Right cardiac atrium (tissue), 5 donors: ENCODE measurements at regions of chr14 and their contacts with region 1.

Region 1: GRCh38 chr14:61837336-61838229 is 75.4 kb downstream of the SNAPC1 start:
- DNase-seq: peak; percentile 76 to 88 (median 85)
- ATAC-seq: peak; percentile 91 to 92
- H3K4me3 ChIP-seq: no peak overlapping the region
- H3K27ac ChIP-seq: no peak overlapping the region
- H3K4me1 ChIP-seq: no peaks in the 10 kb centered on the region
- H3K27me3 ChIP-seq: no peaks in the 10 kb centered on the region

Region 2: GRCh38 chr14:61296719-61297502 is 540.7 kb before region 1 on chr14:
- intact Hi-C with region 1: loop called in 3 of 4 experiments (anchors 5 to 10 kb)
- DNase-seq: no peak
- ATAC-seq: no peak
- H3K4me3 ChIP-seq: no peak overlapping the region
- H3K27ac ChIP-seq: no peak overlapping the region
- H3K4me1 ChIP-seq: no peaks in the 10 kb centered on the region
- H3K27me3 ChIP-seq: no peaks in the 10 kb centered on the region

Region 3: GRCh38 chr14:61456720-61457119 is 380.9 kb before region 1 on chr14:
- intact Hi-C with region 1: loop called in 3 of 4 experiments (anchors 2 to 5 kb)
- DNase-seq: peak; percentile 85 to 89 (median 86)
- ATAC-seq: peak; percentile 74 to 76
- H3K4me3 ChIP-seq: no peak overlapping the region
- H3K27ac ChIP-seq: no peak overlapping the region
- H3K4me1 ChIP-seq: no peaks in the 10 kb centered on the region
- H3K27me3 ChIP-seq: no peaks in the 10 kb centered on the region

Region 4: DNA sequence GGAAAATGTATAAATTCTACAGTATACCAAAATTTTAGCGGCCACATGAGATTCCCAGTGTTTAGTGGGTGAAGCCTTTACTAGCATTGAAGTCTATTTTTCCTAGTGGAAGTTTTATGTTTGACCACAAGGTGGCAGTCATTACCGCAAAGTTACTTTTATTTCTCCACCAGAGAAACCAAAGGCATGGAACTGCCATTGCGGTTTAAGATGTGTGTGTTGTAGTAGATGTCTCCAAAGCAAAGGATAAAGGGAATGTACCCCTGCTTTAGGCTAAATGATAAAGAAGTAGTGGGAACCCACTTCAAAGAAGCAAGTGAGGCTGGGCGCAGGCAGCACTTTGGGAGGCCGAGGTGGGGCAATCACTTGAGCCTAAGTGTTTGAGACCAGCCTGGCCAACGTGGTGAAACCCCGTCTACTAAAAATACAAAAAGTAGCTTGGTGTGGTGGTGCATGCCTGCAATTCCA is 375.7 kb before region 1 on chr14:
- intact Hi-C with region 1: loop called (anchors 2 to 5 kb)
- DNase-seq: no peak
- ATAC-seq: peak; percentile 25 to 34
- H3K4me3 ChIP-seq: no peak overlapping the region
- H3K27ac ChIP-seq: no peak overlapping the region
- H3K4me1 ChIP-seq: peaks cover 3% of the 10 kb centered on the region
- H3K27me3 ChIP-seq: no peaks in the 10 kb centered on the region

Region 5: DNA sequence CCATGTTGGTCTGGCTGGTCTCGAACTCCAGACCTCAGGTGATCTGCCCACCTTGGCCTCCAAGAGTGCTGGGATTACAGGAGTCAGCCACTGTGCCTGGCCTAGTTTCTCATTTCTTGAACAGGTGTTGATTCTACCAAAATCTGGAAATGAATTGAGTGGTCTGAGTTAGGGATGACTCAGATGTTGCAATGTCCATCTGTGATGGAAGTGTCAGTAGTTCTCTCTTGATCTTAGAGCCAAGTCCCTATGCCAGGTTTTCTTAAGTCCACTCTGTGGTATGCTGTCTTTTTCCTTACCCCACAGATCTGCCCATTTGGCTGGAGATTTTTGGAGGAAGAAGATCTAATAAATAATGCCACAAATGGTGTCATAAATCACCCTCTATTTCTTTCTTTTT is 62.7 kb before region 1 on chr14:
- intact Hi-C with region 1: loop called in 2 of 4 experiments (anchors 10 kb)
- DNase-seq: no peak
- ATAC-seq: no peak
- H3K4me3 ChIP-seq: no peak overlapping the region
- H3K27ac ChIP-seq: no peak overlapping the region
- H3K4me1 ChIP-seq: no peaks in the 10 kb centered on the region
- H3K27me3 ChIP-seq: no peaks in the 10 kb centered on the region

Region 6: DNA sequence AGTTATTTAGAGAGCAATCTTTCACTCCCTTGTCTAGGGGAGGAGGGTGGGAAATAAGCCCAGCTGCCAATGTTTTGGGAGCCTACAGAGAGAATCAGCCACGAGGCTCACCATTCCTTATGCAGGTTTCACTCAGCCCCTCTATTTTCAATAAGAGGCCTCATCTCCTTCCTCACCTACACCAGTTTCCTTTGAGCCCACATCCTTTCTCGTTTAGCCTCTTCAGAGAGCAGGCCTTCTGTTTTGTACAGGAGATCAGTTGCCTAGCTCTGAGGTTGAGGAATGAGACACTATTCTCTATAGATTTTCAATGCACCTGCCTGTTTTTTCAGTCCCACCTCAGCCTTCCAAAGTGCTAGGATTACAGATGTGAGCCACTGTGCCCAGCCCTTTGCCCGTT is 57.5 kb before region 1 on chr14:
- intact Hi-C with region 1: loop called in 2 of 4 experiments (anchors 10 kb)
- DNase-seq: no peak
- ATAC-seq: no peak
- H3K4me3 ChIP-seq: no peak overlapping the region
- H3K27ac ChIP-seq: no peak overlapping the region
- H3K4me1 ChIP-seq: no peaks in the 10 kb centered on the region
- H3K27me3 ChIP-seq: no peaks in the 10 kb centered on the region

Region 7: DNA sequence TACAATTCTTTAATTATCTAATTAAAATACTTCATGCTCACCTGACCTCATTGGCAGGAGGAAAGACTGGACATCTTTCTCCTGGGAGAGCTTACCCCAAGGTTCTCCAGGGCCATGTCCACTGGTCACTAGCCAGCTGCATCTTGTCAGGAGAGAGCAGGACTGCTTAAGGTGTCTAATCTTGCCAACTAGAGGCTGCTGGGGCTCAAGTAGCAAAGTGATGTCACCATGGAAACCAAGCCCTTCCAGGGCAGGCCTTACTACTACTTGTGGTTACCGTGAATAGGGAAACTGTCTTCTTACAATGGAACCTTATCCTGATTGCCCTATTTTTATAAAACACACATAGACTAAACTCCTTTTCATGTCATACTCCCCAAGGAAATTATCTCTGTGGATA is 301.0 kb after region 1 on chr14:
- intact Hi-C with region 1: no loop called
- DNase-seq: peak in 1 of 3 donors; percentile 41
- ATAC-seq: peak in 1 of 2 donors; percentile 60
- H3K4me3 ChIP-seq: no peak overlapping the region
- H3K27ac ChIP-seq: no peak overlapping the region
- H3K4me1 ChIP-seq: no peaks in the 10 kb centered on the region
- H3K27me3 ChIP-seq: no peaks in the 10 kb centered on the region